ENCODE measurements at regions of chr7 and their contacts with region 1.

Region 1: DNA sequence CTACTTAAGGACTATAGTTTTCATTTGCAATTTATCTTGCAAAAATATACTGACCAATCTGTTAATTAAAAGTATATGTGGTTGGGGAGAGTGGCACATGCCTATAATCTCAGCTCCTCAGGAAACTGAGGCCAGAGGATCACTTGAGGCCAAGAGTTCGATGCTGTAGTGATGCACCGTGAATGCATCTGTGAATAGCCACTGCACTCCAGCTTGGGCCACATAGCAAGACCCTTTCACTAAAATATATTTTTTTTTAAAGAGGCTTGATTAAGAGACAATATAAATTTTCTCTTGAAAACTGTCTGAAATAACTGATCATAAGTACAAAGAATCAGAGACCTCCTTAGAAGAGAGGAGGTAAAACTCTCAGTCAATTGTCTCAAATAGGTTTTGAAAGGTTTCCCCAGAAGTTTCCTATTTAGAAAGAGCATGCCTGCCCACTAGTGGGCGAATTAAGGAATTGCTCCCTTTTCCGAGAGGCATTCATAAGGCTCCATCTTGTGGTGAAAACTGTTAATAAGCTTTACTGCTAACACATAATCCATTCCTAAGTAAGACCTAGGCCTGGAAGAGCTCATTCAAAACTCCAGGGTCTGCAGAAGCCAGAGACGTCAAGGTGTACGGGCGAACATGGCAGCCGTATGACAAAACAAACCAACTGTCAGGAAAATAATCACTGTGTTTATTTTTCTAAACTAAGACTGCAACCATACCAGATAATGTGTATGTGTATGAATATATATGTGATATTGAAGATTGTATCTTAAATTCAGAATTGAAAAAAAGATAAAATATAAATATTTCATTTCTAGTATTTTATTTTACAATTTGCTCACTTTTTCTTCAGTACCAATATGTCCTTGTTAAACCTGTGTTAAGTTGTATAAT is 6.8 kb upstream of the TAS2R40 start:
- DNase-seq: peak; percentile 66 to 76 (median 74)
- ATAC-seq: peak; percentile 94
- H3K4me3 ChIP-seq: no peak overlapping the region
- H3K27ac ChIP-seq: no peak overlapping the region
- H3K4me1 ChIP-seq: no peaks in the 10 kb centered on the region
- H3K27me3 ChIP-seq: no peaks in the 10 kb centered on the region
- CTCF ChIP-seq: peak; percentile 96 to 100 (median 100)
- POLR2A ChIP-seq: no peak

Region 2: GRCh38 chr7:143008007-143008901 is 206.8 kb before region 1 on chr7:
- intact Hi-C with region 1: loop called (anchors 5 kb)
- DNase-seq: peak; percentile 80 to 88 (median 84)
- ATAC-seq: peak; percentile 89
- H3K4me3 ChIP-seq: no peak overlapping the region
- H3K27ac ChIP-seq: no peak overlapping the region
- H3K4me1 ChIP-seq: no peaks in the 10 kb centered on the region
- H3K27me3 ChIP-seq: no peaks in the 10 kb centered on the region
- CTCF ChIP-seq: peak; percentile 86 to 99 (median 95)
- POLR2A ChIP-seq: no peak

Region 3: DNA sequence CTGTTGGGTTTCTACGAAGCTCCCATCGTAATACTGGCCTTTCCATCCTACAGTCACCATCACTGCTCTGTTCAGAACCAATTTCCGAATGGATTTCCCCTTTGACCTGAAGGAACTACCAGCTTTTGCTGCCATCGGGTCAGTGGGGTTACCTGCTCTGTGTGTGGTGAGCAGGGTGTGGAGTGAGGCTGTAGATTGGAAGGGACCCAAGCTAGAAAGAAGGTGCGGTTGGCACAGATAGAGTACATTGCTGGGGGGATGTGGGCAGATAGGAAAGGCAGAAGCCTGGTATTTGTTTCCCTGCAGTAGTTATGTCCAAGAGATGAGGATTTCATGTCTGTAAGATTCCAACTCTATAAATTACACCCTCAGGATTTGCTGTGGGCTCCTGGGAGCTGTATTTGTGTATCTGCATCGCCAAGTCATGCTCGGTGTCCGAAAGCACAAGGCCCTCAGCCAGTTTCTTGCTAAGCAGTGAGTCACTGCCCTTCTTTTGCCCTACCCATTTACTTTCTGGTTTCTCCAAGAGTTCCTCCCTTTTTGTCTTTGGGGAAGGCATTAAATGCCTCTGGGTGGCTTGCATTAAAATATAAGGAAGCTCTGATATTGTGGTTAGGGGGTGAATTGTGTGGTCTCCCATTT is 116.3 kb after region 1 on chr7:
- intact Hi-C with region 1: no loop called
- DNase-seq: peak in 1 of 4 donors; percentile 45
- ATAC-seq: no peak
- H3K4me3 ChIP-seq: no peak overlapping the region
- H3K27ac ChIP-seq: no peak overlapping the region
- H3K4me1 ChIP-seq: no peaks in the 10 kb centered on the region
- H3K27me3 ChIP-seq: no peaks in the 10 kb centered on the region
- CTCF ChIP-seq: no peak
- POLR2A ChIP-seq: no peak